AG04450 (cell line): ENCODE measurements at regions of chr11 and their contacts with region 1.

Region 1: GRCh38 chr11:119323538-119324033 is 6.7 kb upstream of the MCAM start:
- DNase-seq: no peak
- H3K4me3 ChIP-seq: no peak overlapping the region
- H3K27ac ChIP-seq: no peak overlapping the region
- H3K27me3 ChIP-seq: no peaks in the 10 kb centered on the region
- CTCF ChIP-seq: peak; percentile 81

Region 2: GRCh38 chr11:119101759-119102423 is 221.7 kb before region 1 on chr11 and contains the start of gene DPAGT1:
- CTCF ChIA-PET with region 1: interaction called, 14 read pairs
- POLR2A ChIA-PET with region 1: no interaction called
- DNase-seq: peak; percentile 91
- H3K4me3 ChIP-seq: peak within 1 kb of the TSS; percentile 87
- H3K27ac ChIP-seq: peak within 1 kb of the TSS; percentile 93
- H3K27me3 ChIP-seq: no peaks in the 10 kb centered on the region
- CTCF ChIP-seq: no peak
- polyA plus RNA-seq, gene DPAGT1: 59.2 and 62.5 TPM in 2 replicates

Region 3: GRCh38 chr11:119168471-119169281 is 154.9 kb before region 1 on chr11 and contains the start of gene NLRX1:
- CTCF ChIA-PET with region 1: interaction called, 10 read pairs
- POLR2A ChIA-PET with region 1: interaction called, 3 read pairs
- DNase-seq: peak; percentile 39
- H3K4me3 ChIP-seq: peak within 1 kb of the TSS; percentile 64
- H3K27ac ChIP-seq: peak within 1 kb of the TSS; percentile 52
- H3K27me3 ChIP-seq: no peaks in the 10 kb centered on the region
- CTCF ChIP-seq: peak; percentile 85
- polyA plus RNA-seq, gene NLRX1: 4.7 and 6.4 TPM in 2 replicates

Region 4: DNA sequence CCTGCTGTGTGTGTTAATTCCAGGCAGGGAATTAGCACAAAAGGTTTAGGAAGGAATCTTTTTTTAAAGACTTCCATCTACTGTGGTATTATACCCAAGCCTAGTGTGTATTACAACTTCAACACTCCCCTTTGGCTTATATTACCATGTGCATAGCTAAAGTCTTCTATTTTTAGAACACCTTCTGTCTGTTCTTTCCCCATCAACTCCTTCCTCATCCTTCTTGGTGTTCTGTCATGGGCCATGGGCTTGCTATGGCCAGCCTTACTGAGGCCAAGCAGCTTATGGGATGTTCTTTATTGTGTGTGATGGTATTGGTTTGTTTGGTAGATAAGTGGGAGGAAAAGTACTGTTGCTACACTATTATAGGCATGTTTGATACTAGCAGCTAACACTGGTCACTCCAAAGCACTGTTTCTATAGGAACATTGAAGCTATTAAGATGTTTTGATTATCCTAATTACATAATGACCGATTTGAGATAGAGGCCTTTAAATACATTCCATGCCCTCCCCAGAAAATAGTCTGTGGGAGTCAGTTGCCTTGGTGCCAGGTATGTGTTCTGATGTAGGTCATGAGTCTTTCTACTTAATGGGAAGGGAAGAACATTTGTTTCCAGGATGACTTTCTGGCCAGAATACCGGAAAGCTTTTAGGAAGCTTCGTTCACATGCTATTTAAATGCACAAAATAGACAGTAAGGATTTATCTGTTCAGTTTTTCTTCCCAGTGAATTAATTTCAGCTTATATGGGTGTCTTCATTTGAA is 23.2 kb before region 1 on chr11:
- CTCF ChIA-PET with region 1: interaction called, 57 read pairs
- POLR2A ChIA-PET with region 1: no interaction called
- DNase-seq: no peak
- H3K4me3 ChIP-seq: no peak overlapping the region
- H3K27ac ChIP-seq: no peak overlapping the region
- H3K27me3 ChIP-seq: no peaks in the 10 kb centered on the region
- CTCF ChIP-seq: no peak

Region 5: GRCh38 chr11:119373921-119374631 is 50.5 kb after region 1 on chr11:
- CTCF ChIA-PET with region 1: interaction called, 28 read pairs
- POLR2A ChIA-PET with region 1: no interaction called
- DNase-seq: peak; percentile 51
- H3K4me3 ChIP-seq: no peak overlapping the region
- H3K27ac ChIP-seq: no peak overlapping the region
- H3K27me3 ChIP-seq: peaks cover 12% of the 10 kb centered on the region
- CTCF ChIP-seq: peak; percentile 97